Activated B cell treated with CpG ODN at 0.5 μM for 24 hours (primary cell): ENCODE measurements at regions of chr17 and their contacts with region 1.

Region 1: GRCh38 chr17:75289115-75289831 is at the start of gene SLC25A19:
- DNase-seq: peak; percentile 86
- ATAC-seq: peak; percentile 86
- H3K4me3 Mint-ChIP-seq: peak within 1 kb of the TSS; percentile 94
- H3K27ac Mint-ChIP-seq: peak within 1 kb of the TSS; percentile 100
- H3K4me1 Mint-ChIP-seq: peaks cover 52% of the 10 kb centered on the region
- H3K27me3 Mint-ChIP-seq: no peaks in the 10 kb centered on the region
- CTCF ChIP-seq: no peak
- total RNA-seq, gene SLC25A19: 87.6 and 96.7 TPM in 2 replicates

Region 2: GRCh38 chr17:75109407-75110233 is 179.7 kb before region 1 on chr17 and contains the start of gene ARMC7:
- CTCF ChIA-PET with region 1: interaction called, 10 read pairs
- POLR2A ChIA-PET with region 1: interaction called, 7 read pairs
- intact Hi-C with region 1: no loop called
- DNase-seq: peak; percentile 91
- ATAC-seq: peak; percentile 80
- H3K4me3 Mint-ChIP-seq: peak within 1 kb of the TSS; percentile 89
- H3K27ac Mint-ChIP-seq: peak within 1 kb of the TSS; percentile 87
- H3K4me1 Mint-ChIP-seq: peaks cover 36% of the 10 kb centered on the region
- H3K27me3 Mint-ChIP-seq: no peaks in the 10 kb centered on the region
- CTCF ChIP-seq: no peak
- total RNA-seq, gene ARMC7: 11.8 and 15.4 TPM in 2 replicates

Region 3: GRCh38 chr17:75154195-75155106 is 134.8 kb before region 1 on chr17 and contains the start of gene JPT1:
- CTCF ChIA-PET with region 1: no interaction called
- POLR2A ChIA-PET with region 1: no interaction called
- intact Hi-C with region 1: no loop called
- DNase-seq: peak; percentile 85
- ATAC-seq: peak; percentile 97
- H3K4me3 Mint-ChIP-seq: peak within 1 kb of the TSS; percentile 91
- H3K27ac Mint-ChIP-seq: peak within 1 kb of the TSS; percentile 77
- H3K4me1 Mint-ChIP-seq: peaks cover 34% of the 10 kb centered on the region
- H3K27me3 Mint-ChIP-seq: no peaks in the 10 kb centered on the region
- CTCF ChIP-seq: no peak
- total RNA-seq, gene JPT1: 70.5 and 72.9 TPM in 2 replicates

Region 4: GRCh38 chr17:75199886-75200618 is 89.2 kb before region 1 on chr17:
- CTCF ChIA-PET with region 1: no interaction called
- POLR2A ChIA-PET with region 1: no interaction called
- intact Hi-C with region 1: no loop called
- DNase-seq: no peak
- ATAC-seq: no peak
- H3K4me3 Mint-ChIP-seq: no peak overlapping the region
- H3K27ac Mint-ChIP-seq: no peak overlapping the region
- H3K4me1 Mint-ChIP-seq: peaks cover 6% of the 10 kb centered on the region
- H3K27me3 Mint-ChIP-seq: no peaks in the 10 kb centered on the region
- CTCF ChIP-seq: no peak

Region 5: DNA sequence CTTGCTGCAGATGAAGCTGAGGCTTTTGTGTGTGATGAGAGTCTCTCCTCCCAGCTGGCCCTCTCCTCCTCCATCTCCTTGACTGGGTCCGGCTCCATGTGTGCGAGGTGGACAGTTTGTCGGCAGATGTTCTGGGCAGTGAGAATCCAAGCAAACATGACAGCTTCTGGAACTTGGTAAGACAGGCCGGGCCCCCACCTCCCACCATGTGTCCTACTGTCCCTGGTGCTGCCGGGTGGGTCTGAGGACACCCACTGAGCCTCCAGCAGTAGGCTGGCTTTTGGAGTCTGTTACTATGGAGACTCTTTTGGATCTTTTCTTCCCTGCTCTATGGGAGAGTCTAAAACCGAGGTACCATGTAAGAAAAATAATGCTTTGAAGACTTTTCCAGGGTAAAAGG is 71.1 kb before region 1 on chr17:
- CTCF ChIA-PET with region 1: no interaction called
- POLR2A ChIA-PET with region 1: no interaction called
- intact Hi-C with region 1: no loop called
- DNase-seq: no peak
- ATAC-seq: no peak
- H3K4me3 Mint-ChIP-seq: no peak overlapping the region
- H3K27ac Mint-ChIP-seq: no peak overlapping the region
- H3K4me1 Mint-ChIP-seq: no peaks in the 10 kb centered on the region
- H3K27me3 Mint-ChIP-seq: no peaks in the 10 kb centered on the region
- CTCF ChIP-seq: no peak

Region 6: GRCh38 chr17:75261336-75262111 is 27.7 kb before region 1 on chr17 and contains the starts of genes GGA3 and MRPS7:
- CTCF ChIA-PET with region 1: interaction called, 14 read pairs
- POLR2A ChIA-PET with region 1: interaction called, 54 read pairs
- intact Hi-C with region 1: loop called (anchors 1 kb)
- DNase-seq: peak; percentile 93
- ATAC-seq: peak; percentile 97
- H3K4me3 Mint-ChIP-seq: peak within 1 kb of the TSS; percentile 99
- H3K27ac Mint-ChIP-seq: peak within 1 kb of the TSS; percentile 99
- H3K4me1 Mint-ChIP-seq: peaks cover 56% of the 10 kb centered on the region
- H3K27me3 Mint-ChIP-seq: no peaks in the 10 kb centered on the region
- CTCF ChIP-seq: no peak
- total RNA-seq, gene GGA3: 116 and 119 TPM in 2 replicates
- total RNA-seq, gene MRPS7: 67.6 and 71.3 TPM in 2 replicates

Region 7: DNA sequence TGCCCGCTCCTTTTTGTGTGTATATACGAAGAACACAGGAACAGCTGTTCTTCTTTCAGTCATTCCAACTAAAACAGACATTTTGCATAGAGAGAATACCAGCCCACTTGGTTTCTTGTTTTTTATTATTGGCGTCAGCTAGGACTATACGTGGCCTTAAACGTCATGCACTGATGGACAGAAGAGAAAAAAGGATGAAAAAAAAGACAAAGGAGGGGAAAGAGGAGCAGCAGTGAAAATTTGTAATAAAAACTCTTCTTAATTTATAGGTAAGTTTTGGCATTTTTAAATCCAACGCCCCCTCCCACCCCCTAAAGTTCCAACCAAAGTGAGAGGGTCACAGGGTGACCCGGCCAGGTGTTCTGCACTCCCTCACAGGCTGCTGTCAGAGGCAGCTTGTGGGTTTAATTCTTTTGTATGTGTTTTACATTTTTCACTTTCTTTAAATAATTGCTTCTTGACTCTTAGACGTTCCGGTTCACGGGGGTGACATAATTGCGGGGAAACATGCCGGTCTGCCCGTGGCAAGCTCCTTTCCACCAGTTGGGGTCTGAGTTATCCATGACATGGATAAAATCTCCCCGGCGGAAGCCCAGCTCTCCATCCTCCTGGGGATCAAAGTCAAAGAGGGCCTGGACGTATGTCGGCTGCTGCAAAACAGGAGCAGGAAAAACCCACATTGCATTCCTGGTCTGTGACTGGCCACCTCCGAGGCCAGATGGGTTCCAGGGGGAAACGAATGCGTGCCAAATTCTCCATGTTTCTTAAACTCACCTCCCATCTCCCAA is 30.8 kb after region 1 on chr17:
- CTCF ChIA-PET with region 1: interaction called, 49 read pairs
- POLR2A ChIA-PET with region 1: interaction called, 1,048 read pairs
- intact Hi-C with region 1: loop called (anchors 1 kb)
- DNase-seq: no peak
- ATAC-seq: peak; percentile 53
- H3K4me3 Mint-ChIP-seq: peak overlapping the region; percentile 70
- H3K27ac Mint-ChIP-seq: peak overlapping the region; percentile 93
- H3K4me1 Mint-ChIP-seq: peaks cover 87% of the 10 kb centered on the region
- H3K27me3 Mint-ChIP-seq: no peaks in the 10 kb centered on the region
- CTCF ChIP-seq: no peak

Region 8: GRCh38 chr17:75352079-75352569 is 62.9 kb after region 1 on chr17:
- CTCF ChIA-PET with region 1: interaction called, 3 read pairs
- POLR2A ChIA-PET with region 1: interaction called, 70 read pairs
- intact Hi-C with region 1: no loop called
- DNase-seq: no peak
- ATAC-seq: peak; percentile 45
- H3K4me3 Mint-ChIP-seq: peak overlapping the region; percentile 41
- H3K27ac Mint-ChIP-seq: peak overlapping the region; percentile 57
- H3K4me1 Mint-ChIP-seq: peaks cover 88% of the 10 kb centered on the region
- H3K27me3 Mint-ChIP-seq: no peaks in the 10 kb centered on the region
- CTCF ChIP-seq: no peak

Region 9: DNA sequence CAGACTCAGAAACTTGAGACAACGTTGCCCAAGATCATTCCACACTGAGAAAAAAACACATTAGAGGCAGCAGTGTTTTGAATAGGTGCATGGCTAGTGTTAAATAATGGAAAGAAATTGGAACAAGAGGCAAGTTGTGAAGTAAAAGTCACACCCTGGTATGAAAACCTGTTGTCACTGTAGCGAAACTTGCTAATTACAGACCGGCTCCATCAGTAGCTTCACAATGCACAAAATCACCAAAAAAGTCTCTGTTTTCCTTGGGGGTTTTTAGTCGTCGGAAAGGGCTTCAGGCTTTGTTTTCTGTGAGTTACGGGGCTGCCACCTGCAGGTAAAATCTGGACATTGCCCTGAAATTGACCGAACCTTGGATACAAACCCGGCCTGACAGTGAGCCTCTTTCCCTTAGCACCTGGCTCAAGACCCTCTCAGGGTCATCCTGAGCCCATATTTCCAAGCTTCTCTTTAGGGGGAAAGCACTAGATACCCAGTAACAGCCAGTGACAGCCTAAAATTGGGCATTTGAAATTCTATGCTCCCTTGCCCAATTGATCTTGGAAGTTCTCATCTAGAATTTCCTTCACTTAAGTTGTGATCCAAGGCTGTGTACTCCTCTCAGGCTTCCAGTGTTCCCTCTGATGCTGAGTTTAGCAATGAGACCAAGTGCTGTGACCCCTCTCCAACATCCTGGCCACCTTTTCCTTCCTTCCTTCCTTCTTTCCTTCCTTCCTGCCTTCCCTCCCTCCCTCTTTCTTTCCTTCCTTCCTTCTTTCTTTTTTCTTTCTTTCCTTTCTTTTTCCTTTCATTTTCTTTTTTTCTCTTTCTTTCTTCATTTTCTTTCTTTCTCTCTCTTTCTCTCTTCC is 123.4 kb after region 1 on chr17:
- CTCF ChIA-PET with region 1: interaction called, 40 read pairs
- POLR2A ChIA-PET with region 1: interaction called, 136 read pairs
- intact Hi-C with region 1: loop called (anchors 1 kb)
- DNase-seq: peak; percentile 63
- ATAC-seq: peak; percentile 94
- H3K4me3 Mint-ChIP-seq: peak overlapping the region; percentile 53
- H3K27ac Mint-ChIP-seq: peak overlapping the region; percentile 63
- H3K4me1 Mint-ChIP-seq: peaks cover 12% of the 10 kb centered on the region
- H3K27me3 Mint-ChIP-seq: no peaks in the 10 kb centered on the region
- CTCF ChIP-seq: peak; percentile 9

Region 10: DNA sequence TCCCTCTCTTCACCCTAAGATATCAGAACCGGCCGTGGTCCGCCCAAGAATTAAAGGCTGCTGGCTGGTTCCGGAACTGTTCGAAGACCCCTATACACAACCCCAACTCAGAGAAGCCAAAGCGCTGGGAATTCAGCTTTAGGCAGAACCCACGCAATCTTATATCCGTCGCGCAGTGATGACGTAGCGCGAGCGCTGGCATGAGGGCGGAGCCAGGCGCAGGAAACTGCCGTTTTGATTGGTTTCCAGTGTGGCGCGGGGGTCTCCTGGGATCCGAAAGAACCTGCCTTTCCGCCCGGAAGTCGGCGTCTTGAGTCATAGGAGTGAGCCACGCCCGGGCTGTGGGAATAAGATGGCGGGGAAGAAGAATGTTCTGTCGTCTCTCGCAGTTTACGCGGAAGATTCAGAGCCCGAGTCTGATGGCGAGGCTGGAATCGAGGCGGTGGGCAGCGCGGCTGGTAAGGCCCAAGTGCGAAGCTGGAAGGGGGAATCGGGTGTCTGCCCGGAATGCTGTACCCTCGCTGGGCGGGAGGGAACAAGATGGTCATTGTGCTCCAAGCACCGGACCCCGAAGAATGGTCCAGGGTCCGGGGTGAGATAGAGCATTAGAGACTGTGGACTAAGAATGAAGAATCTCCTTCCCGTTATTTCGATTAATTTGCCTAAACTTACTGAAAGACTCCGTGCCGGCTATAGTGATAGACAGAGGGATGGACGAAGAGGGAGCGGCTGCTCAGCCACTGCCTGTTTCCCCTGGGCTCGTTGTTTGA is 377.9 kb after region 1 on chr17 and contains the starts of genes RECQL5 and SAP30BP:
- CTCF ChIA-PET with region 1: no interaction called
- POLR2A ChIA-PET with region 1: interaction called, 3 read pairs
- intact Hi-C with region 1: loop called (anchors 1 kb)
- DNase-seq: peak; percentile 95
- ATAC-seq: peak; percentile 74
- H3K4me3 Mint-ChIP-seq: peak within 1 kb of the TSS; percentile 55
- H3K27ac Mint-ChIP-seq: peak within 1 kb of the TSS; percentile 27
- H3K4me1 Mint-ChIP-seq: peaks cover 47% of the 10 kb centered on the region
- H3K27me3 Mint-ChIP-seq: no peaks in the 10 kb centered on the region
- CTCF ChIP-seq: no peak
- total RNA-seq, gene RECQL5: 55.9 and 65.4 TPM in 2 replicates
- total RNA-seq, gene SAP30BP: 177 and 184 TPM in 2 replicates